ENCODE measurements at regions of chr2 and their contacts with region 1.

Region 1: DNA sequence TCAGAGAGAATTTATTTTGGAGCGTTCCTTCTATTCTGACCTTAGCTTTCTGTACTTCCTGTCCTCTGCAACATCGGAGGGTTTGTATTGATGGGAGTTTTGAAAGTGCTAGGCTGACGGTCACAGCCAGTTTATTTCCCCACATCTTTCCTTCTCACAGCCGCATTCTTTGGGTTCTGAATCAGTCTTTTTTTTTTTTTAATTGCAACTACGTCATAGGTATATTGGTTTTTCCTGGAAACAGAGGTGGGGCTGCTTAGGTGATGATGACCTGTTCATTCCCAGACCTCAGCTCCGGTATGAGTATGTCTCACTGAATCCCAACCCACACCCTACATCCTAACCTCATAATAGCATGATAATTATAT is 88.4 kb downstream of the SOWAHC start:
- DNase-seq: peak; percentile 49 to 96
- H3K4me3 ChIP-seq: peak overlapping the region; percentile 32; the same call in 1 of the 2 replicates
- H3K27ac ChIP-seq: peak overlapping the region; percentile 85
- H3K4me1 ChIP-seq: peaks cover 59% of the 10 kb centered on the region
- H3K27me3 ChIP-seq: no peaks in the 10 kb centered on the region
- CTCF ChIP-seq: no peak

Region 2: DNA sequence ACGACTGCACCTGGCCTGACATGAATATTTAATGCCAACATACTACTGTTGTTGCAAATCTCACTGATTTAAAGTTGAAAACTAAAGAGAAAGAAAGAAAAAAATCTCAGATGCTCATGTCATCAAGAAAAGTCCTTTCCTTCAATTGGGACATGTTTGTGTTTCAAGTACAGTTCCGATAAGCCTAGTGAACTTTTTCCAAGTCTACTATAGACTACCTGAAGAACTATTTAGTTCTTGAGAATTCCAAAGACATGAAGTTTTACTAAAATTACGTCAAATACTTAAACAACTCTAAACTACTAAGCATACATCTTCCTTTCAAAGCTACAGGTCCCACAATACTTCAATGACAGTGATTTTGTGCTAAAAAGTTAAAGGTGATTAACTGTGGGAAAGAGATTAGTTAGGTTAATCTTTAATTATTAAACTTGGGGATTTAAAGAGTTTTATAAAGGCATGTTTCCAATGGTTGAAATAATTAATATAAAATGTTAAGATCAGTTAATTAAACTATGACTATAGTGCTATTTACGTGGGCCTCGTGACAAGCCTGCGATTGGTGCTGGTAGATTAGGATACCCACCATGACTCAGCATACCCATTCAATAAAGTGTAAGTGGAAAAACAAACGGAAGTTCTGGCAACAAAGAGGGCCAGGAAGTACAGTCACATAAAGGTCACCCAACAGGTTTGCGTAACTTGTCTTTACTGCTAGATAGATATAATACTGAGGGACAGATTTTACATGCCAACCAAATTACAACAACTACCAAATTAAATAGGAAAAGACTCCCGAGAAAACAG is 144.3 kb before region 1 on chr2:
- CTCF ChIA-PET with region 1: interaction called, 7 read pairs
- POLR2A ChIA-PET with region 1: no interaction called
- intact Hi-C with region 1: loop called (anchors 5 kb)
- DNase-seq: peak; percentile 41 to 93
- H3K4me3 ChIP-seq: no peak overlapping the region
- H3K27ac ChIP-seq: peak overlapping the region; percentile 95
- H3K4me1 ChIP-seq: peaks cover 39% of the 10 kb centered on the region
- H3K27me3 ChIP-seq: no peaks in the 10 kb centered on the region
- CTCF ChIP-seq: no peak

Region 3: DNA sequence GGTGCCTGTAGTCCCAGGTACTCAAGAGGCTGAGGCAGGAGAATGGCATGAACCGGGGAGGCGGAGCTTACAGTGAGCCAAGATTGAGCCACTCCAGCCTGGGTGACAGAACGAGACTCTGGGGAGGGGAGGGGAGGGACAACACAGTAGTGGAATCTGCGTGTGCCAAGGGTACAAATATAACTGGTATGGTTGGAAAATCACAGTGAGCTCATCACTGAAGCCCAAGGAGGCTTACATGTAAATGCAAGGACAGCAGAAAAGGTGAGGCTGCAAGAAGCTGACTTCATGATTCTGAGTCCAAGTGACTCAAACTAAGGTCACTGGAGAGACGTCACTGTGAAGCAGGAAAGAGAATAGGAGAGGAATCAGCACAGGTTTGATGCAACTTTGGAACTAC is 98.0 kb before region 1 on chr2:
- CTCF ChIA-PET with region 1: interaction called, 3 read pairs
- POLR2A ChIA-PET with region 1: interaction called, 3 read pairs
- intact Hi-C with region 1: loop called (anchors 2 kb)
- DNase-seq: peak; percentile 75 to 77
- H3K4me3 ChIP-seq: no peak overlapping the region
- H3K27ac ChIP-seq: peak overlapping the region; percentile 68
- H3K4me1 ChIP-seq: peaks cover 53% of the 10 kb centered on the region
- H3K27me3 ChIP-seq: no peaks in the 10 kb centered on the region
- CTCF ChIP-seq: no peak

Region 4: DNA sequence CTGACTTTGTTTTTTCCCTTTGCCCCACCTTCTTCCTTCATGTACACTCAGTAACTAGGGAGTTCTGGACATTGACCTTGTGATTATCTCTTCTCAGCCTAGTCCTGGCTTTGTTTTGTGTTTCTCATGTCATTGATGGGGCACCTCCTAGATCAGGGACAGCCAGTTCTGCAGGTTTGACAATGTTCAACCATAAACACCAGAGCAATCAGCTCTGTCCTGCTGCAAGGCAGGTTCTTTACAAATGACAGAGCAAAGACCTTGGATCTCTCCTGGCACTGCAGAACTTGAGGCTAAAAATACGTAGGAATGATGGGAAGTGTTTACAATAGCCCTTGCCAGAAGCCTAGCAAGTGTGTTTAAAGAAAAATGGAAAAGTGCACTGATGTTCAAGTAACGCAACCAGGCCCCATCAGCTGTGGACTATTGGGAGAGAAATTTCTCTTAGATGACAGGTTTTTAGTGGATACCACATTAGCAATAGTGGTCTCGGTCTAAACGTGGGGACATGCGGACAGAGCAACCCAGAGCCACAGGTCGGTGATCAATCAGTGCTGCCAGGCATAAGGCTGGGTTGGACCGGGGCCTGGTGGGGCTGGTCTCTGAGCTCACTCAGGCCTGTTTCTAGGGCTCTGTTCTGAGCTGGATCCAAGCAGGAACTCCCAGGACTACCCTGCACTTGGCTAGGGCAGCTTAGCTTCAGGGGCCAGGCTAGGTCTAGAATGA is 11.6 kb before region 1 on chr2:
- CTCF ChIA-PET with region 1: no interaction called
- POLR2A ChIA-PET with region 1: interaction called, 10 read pairs
- intact Hi-C with region 1: no loop called
- DNase-seq: peak; percentile 61 to 79
- H3K4me3 ChIP-seq: no peak overlapping the region
- H3K27ac ChIP-seq: peak overlapping the region; percentile 64
- H3K4me1 ChIP-seq: peaks cover 44% of the 10 kb centered on the region
- H3K27me3 ChIP-seq: no peaks in the 10 kb centered on the region
- CTCF ChIP-seq: no peak

Measured in PC-9 (cell line).